Left cardiac atrium (tissue), 4 donors: ENCODE measurements at regions of chr19 and their contacts with region 1.

Region 1: DNA sequence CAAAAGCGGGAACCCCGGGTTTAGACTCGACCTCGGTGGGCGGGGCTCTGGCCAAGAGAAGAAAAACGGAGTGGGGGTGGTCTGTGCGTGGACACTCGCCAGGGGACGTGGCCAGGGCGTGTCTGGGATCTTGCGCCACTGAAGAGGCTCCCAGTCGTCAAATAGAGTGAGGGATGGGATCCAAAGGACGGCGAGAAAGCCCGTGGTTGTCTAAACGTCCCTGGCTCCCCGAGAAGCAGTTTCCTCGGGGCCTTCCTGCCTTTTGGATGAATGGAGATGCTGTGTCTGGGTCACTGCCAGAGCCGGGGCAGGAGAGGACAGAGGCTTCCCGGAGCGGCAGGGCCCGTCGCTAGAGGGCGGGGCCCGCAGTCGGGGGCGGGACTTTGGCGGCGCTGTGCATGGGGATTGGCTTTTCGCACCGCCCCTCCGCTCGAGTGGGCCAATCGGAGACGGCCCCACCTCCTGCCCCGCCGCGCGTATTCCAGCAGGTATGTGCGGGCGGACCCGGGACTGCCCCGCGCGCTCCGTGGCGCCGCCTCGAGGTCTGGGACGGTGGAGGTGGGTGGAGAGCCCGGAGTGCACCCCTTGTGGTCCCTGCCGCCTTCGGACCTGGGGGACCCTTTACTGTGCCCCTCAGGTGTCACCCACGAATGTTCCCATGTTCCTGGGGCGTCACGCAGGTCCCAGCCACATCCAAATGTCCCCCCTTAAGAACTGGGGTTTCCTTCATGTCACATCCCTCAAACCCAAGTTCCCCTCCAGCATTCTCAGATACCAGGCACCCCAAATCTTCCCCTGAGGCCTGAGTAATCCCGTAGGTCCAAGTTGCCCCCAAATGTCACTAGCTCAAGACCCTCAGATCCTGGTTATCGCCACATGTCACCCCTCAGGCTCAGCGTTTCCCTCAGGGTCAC is 38.3 kb downstream of the ZSWIM4 start:
- DNase-seq: peak; percentile 97
- ATAC-seq: peak; percentile 80 to 87

Region 2: DNA sequence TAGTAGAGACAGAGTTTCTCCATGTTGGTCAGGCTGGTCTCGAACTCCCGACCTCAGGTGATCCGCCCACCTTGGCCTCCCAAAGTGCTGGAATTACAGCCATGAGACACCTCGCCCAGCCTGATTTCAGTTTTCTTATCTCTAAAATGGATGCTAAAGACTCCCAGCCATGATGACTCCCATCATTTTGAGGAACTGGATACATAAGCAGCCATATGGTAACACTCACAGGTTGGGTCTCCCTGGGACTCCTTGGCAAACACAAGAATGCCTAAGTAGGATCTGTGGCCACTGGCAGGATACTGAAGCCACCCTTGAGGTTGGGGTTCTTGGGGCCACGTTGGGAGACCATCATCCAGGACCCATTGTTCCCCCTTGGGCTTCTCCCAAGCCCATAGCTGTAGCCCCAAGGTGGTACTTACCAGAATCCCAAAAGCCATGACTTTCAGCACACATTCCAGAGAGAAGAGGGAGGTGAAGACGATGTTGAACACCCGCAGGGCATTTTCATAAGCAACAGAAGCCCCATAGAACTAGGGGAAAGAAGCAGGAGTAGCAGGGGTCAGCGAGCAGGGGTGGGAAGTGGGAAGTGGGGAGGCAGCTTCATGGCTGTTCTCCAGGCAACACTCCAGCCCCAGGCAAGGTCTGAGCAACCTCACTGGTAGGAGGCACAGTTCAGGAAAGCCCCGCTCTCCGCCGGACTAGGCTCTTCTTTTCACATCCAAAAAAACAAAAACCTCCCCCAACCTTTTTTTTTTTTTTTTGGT is 580.8 kb before region 1 on chr19:
- intact Hi-C with region 1: no loop called
- DNase-seq: no peak
- ATAC-seq: no peak

Region 3: DNA sequence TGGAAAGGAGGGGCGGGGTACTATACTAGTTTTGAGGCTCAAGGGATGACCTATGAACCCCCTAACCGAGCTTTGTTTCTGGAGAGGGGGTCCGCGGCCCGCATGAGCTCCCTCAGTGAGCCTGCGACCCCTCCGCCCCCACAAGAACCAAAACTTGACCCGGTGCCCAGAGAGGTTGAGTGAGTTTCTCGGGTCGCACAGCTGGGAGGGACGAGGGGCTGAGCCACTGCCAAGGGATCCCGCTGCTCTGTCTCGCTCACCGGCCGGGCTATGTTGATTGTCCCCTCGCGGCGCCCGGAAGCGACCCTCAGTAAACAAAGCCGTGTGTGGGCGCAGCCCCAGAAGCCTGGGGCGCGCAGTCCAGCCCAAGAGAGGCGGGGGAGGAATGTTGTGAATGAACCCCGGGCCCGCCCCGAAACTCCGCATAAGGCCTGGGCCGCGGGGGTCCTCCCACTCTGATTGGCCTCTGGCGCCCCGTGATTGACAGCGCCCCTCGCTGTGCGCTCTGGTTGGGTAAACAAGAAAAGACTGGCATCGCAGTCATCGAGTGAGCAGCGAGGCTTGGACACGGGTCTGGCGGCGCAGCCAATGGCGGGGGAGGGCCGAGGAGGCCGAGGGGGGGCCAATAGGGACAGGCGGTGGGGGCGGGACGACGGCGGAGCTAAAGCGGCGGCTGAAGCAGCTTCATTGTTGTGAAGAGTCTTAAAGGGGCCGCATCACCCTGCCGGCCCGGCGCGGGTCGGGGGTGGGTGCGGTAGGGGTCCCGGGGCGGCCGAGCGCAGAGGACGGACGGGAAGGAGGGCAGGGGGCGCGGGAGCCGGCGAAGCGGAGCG is 38.6 kb before region 1 on chr19 and contains the start of gene ZSWIM4:
- intact Hi-C with region 1: loop called in 1 of 2 experiments (anchors 5 kb)
- DNase-seq: peak; percentile 99
- ATAC-seq: peak; percentile 95 to 98
- total RNA-seq, gene ZSWIM4: 3.4 to 7.3 TPM